Common myeloid progenitor, CD34-positive (primary cell): ENCODE measurements at regions of chr2 and their contacts with region 1.

Region 1: DNA sequence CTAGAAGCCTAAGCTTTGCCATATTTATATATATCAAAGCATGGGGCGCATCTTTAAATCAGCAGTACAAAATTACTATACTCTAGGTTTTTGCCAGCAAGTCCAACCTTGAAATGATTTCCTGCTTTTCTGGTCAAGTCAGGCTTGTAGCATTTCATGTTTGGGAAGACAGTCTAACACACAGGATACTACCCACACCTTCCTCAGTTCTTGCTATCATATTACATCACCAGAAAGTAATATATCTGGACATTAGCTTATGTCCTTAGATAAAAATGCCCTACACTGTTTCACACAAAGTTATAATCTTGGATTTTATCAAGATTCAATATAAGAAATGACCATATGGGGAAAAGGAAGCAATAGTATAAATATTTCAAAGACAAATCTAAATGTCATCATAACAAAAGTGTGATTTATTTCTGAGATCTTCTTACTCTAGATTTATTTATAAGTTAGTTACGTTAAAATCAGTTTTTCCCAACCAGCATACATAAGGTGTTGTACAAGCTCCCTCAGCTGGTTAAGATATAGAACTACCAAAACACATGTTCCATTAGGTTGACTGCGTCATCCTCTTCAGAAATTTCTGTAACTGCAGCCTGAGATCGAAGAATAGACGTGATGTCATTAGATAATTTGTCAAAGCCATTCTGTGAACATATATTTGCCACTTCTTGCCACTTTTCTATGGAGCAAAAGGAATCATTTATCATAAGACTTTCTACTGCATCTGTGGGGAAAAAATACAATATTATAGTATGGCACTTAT is 56.7 kb downstream of the CLHC1 start:
- DNase-seq: peak; percentile 74 to 83 (median 82)
- H3K4me3 ChIP-seq: peak overlapping the region in 1 of 7 experiments; percentile 19
- H3K27ac ChIP-seq: no peak overlapping the region
- H3K4me1 ChIP-seq: peaks cover 0 to 6% (median 4%) of the 10 kb centered on the region in 4 experiments
- H3K27me3 ChIP-seq: no peaks in the 10 kb centered on the region

Region 2: DNA sequence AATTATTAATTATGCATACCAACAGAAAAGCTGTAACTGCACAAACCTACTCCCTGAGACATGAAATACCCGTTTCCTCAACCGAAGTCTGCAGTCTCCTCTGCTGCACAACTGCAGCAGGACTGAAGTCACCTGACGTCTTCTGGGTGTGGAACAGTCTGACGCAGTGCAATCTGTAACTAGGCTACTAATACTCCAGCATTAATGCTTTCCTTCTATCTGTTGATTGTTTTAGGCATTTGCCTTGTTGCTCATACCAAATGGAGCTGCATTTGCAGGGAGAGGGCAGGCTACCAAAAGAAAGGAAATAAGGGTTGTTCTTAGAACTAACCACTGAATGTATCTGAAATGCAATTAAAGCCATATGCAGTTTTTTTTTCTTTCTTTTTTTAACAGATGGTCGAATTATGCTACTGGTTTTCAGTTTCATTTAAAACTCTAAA is 165.3 kb before region 1 on chr2:
- CTCF ChIA-PET with region 1: interaction called, 137 read pairs
- POLR2A ChIA-PET with region 1: interaction called, 3 read pairs
- DNase-seq: peak; percentile 50 to 90 (median 82)
- H3K4me3 ChIP-seq: peak overlapping the region in 6 of 7 experiments; percentile 58 to 82 (median 74)
- H3K27ac ChIP-seq: peak overlapping the region; percentile 28 to 66
- H3K4me1 ChIP-seq: peaks cover 19 to 65% (median 45%) of the 10 kb centered on the region in 4 experiments
- H3K27me3 ChIP-seq: no peaks in the 10 kb centered on the region

Region 3: GRCh38 chr2:55120634-55121359 is 54.6 kb before region 1 on chr2:
- CTCF ChIA-PET with region 1: no interaction called
- POLR2A ChIA-PET with region 1: no interaction called
- DNase-seq: peak in 2 of 3 donors; percentile 67 to 81
- H3K4me3 ChIP-seq: peak overlapping the region in 1 of 7 experiments; percentile 23
- H3K27ac ChIP-seq: peak overlapping the region in 1 of 2 experiments; percentile 71
- H3K4me1 ChIP-seq: peaks cover 14 to 58% (median 35%) of the 10 kb centered on the region in 4 experiments
- H3K27me3 ChIP-seq: no peaks in the 10 kb centered on the region